CD4-positive, alpha-beta T cell (primary cell): ENCODE measurements at regions of chr3 and their contacts with region 1.

Region 1: GRCh38 chr3:64030741-64031140 is 7.4 kb upstream of the PSMD6 start:
- DNase-seq: peak; percentile 56 to 93 (median 66)
- ATAC-seq: peak; percentile 98
- H3K4me3 ChIP-seq: peak overlapping the region; percentile 42
- H3K4me3 Mint-ChIP-seq: peak overlapping the region; percentile 80
- H3K27ac ChIP-seq: no peak overlapping the region
- H3K27ac Mint-ChIP-seq: no peak overlapping the region
- H3K4me1 ChIP-seq: peaks cover 9% of the 10 kb centered on the region
- H3K4me1 Mint-ChIP-seq: peaks cover 8% of the 10 kb centered on the region
- H3K27me3 ChIP-seq: peaks cover 13 to 17% of the 10 kb centered on the region in 2 experiments
- H3K27me3 Mint-ChIP-seq: peaks cover 34% of the 10 kb centered on the region
- CTCF ChIP-seq: peak; percentile 94

Region 2: DNA sequence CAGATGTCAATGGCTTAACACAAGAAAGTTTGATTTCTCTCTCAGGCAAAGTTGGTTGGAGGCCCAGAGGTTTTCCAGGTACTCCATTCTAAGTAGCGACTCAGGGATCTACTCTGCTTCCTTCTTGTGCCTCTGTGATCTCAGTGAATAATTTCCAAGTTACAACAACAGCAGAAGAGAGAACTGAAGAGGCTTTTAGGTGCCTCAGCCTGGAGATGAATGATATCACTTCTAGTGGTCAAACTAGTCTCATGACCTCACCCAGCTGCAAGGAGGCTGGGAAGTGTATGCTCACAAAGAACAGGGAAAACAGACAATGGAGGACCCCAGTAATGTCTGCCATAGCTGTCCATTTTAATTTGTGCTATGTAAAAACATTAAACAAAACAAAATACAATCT is 199.2 kb after region 1 on chr3:
- CTCF ChIA-PET with region 1: no interaction called
- POLR2A ChIA-PET with region 1: no interaction called
- intact Hi-C with region 1: no loop called
- DNase-seq: no peak
- ATAC-seq: no peak
- H3K4me3 ChIP-seq: no peak overlapping the region
- H3K4me3 Mint-ChIP-seq: no peak overlapping the region
- H3K27ac ChIP-seq: no peak overlapping the region
- H3K27ac Mint-ChIP-seq: no peak overlapping the region
- H3K4me1 ChIP-seq: no peaks in the 10 kb centered on the region
- H3K4me1 Mint-ChIP-seq: no peaks in the 10 kb centered on the region
- H3K27me3 ChIP-seq: no peaks in the 10 kb centered on the region
- H3K27me3 Mint-ChIP-seq: peaks cover 15% of the 10 kb centered on the region
- CTCF ChIP-seq: no peak

Region 3: GRCh38 chr3:64399205-64399800 is 368.6 kb after region 1 on chr3:
- CTCF ChIA-PET with region 1: no interaction called
- POLR2A ChIA-PET with region 1: no interaction called
- intact Hi-C with region 1: loop called (anchors 2 to 5 kb)
- DNase-seq: peak in 3 of 14 experiments; percentile 3 to 15 (median 11)
- ATAC-seq: no peak
- H3K4me3 ChIP-seq: no peak overlapping the region
- H3K4me3 Mint-ChIP-seq: no peak overlapping the region
- H3K27ac ChIP-seq: no peak overlapping the region
- H3K27ac Mint-ChIP-seq: no peak overlapping the region
- H3K4me1 ChIP-seq: no peaks in the 10 kb centered on the region
- H3K4me1 Mint-ChIP-seq: no peaks in the 10 kb centered on the region
- H3K27me3 ChIP-seq: no peaks in the 10 kb centered on the region
- H3K27me3 Mint-ChIP-seq: no peaks in the 10 kb centered on the region
- CTCF ChIP-seq: no peak

Region 4: GRCh38 chr3:64484289-64484992 is 453.7 kb after region 1 on chr3:
- CTCF ChIA-PET with region 1: no interaction called
- POLR2A ChIA-PET with region 1: no interaction called
- intact Hi-C with region 1: loop called (anchors 1 kb)
- DNase-seq: peak; percentile 30 to 70 (median 47)
- ATAC-seq: peak; percentile 76
- H3K4me3 ChIP-seq: no peak overlapping the region
- H3K4me3 Mint-ChIP-seq: no peak overlapping the region
- H3K27ac ChIP-seq: no peak overlapping the region
- H3K27ac Mint-ChIP-seq: no peak overlapping the region
- H3K4me1 ChIP-seq: peaks cover 4% of the 10 kb centered on the region
- H3K4me1 Mint-ChIP-seq: no peaks in the 10 kb centered on the region
- H3K27me3 ChIP-seq: peaks cover 1 to 12% of the 10 kb centered on the region in 2 experiments
- H3K27me3 Mint-ChIP-seq: peaks cover 26% of the 10 kb centered on the region
- CTCF ChIP-seq: peak; percentile 60